ENCODE measurements at regions of chr19 and their contacts with region 1.

Region 1: DNA sequence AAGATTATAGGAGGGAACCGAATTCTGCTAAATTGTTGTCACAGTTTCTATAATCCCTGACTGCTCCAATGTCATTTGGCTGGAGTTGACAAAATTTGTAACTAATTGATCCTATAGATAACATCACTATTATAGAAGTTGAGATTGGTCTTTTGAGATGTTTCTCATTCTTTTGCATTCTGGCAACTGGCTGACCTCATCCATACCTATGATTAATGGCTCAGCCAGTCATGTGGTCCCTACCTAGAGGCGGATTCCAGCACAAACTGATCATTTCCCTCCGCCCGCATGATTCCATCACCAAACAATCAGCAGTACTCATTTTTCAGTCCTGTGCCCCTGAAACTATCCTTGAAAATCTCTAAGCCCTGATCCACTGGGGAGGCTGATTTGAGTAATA is 4.2 kb downstream of the PSG2 start:
- DNase-seq: peak; percentile 89
- H3K4me3 ChIP-seq: no peak overlapping the region
- H3K27ac ChIP-seq: peak overlapping the region; percentile 88
- H3K4me1 ChIP-seq: peaks cover 43% of the 10 kb centered on the region
- H3K27me3 ChIP-seq: no peaks in the 10 kb centered on the region

Region 2: DNA sequence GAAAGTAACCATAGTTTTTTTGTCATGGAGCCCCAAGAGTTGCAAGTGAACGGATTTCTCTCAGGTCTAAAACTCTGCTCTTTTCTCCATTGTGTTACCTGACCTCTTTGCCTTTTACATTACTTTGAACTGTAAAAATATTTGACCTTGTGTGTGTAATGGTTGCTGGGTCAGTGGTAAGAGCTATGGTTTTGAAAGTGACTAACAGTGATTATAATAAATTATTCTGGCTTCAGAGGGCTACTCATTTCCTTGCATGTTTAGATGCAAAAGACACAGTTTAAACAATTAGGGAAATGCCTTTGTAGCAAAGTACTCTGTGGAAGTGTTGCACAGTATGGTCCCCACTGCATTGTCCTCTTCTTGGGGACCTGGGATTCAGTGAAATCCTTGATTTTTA is 283.5 kb before region 1 on chr19:
- in situ Hi-C with region 1: loop called (anchors 25 kb)
- DNase-seq: peak; percentile 38
- H3K4me3 ChIP-seq: no peak overlapping the region
- H3K27ac ChIP-seq: peak overlapping the region; percentile 56; the same call in 1 of the 2 replicates
- H3K4me1 ChIP-seq: peaks cover 30% of the 10 kb centered on the region
- H3K27me3 ChIP-seq: no peaks in the 10 kb centered on the region

Region 3: GRCh38 chr19:42926781-42927180 is 151.5 kb before region 1 on chr19:
- in situ Hi-C with region 1: loop called (anchors 5 kb)
- DNase-seq: no peak
- H3K4me3 ChIP-seq: no peak overlapping the region
- H3K27ac ChIP-seq: no peak overlapping the region
- H3K4me1 ChIP-seq: peaks cover 16% of the 10 kb centered on the region
- H3K27me3 ChIP-seq: no peaks in the 10 kb centered on the region

Region 4: DNA sequence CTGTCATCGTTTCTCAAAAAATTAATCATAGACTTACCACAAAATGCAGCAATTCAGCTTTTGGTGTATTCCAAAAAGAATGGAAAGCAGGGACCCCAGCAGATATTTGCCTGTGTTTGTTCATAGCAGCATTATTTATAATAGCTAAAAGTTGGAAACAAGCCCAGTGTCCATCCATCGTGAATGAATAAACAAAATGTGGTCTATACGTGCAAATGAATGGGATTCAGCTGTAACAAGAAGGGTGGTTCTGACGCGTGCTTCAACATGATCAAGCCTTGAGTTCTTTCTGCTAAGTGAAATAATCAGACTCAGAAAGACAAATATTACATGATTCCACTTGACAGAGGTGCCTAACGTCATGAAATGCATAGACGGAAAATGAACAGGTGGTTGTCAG is 88.5 kb before region 1 on chr19:
- in situ Hi-C with region 1: no loop called
- DNase-seq: no peak
- H3K4me3 ChIP-seq: no peak overlapping the region
- H3K27ac ChIP-seq: no peak overlapping the region
- H3K4me1 ChIP-seq: peaks cover 18% of the 10 kb centered on the region
- H3K27me3 ChIP-seq: no peaks in the 10 kb centered on the region

Region 5: GRCh38 chr19:43224855-43225253 is 146.5 kb after region 1 on chr19:
- in situ Hi-C with region 1: no loop called
- DNase-seq: no peak
- H3K4me3 ChIP-seq: no peak overlapping the region
- H3K27ac ChIP-seq: no peak overlapping the region
- H3K4me1 ChIP-seq: peaks cover 13% of the 10 kb centered on the region
- H3K27me3 ChIP-seq: no peaks in the 10 kb centered on the region